B cell (primary cell): ENCODE measurements at regions of chr14 and their contacts with region 1.

Region 1: GRCh38 chr14:74905375-74906142 is 17.5 kb downstream of the RPS6KL1 start:
- DNase-seq: peak; percentile 79
- ATAC-seq: peak; percentile 72
- H3K4me3 ChIP-seq: no peak overlapping the region
- H3K4me3 Mint-ChIP-seq: no peak overlapping the region
- H3K27ac ChIP-seq: peak overlapping the region in 1 of 2 donors; percentile 33
- H3K27ac Mint-ChIP-seq: peak overlapping the region; percentile 73
- H3K4me1 ChIP-seq: peaks cover 17 to 52% of the 10 kb centered on the region in 2 donors
- H3K4me1 Mint-ChIP-seq: peaks cover 41% of the 10 kb centered on the region
- H3K27me3 ChIP-seq: no peaks in the 10 kb centered on the region
- H3K27me3 Mint-ChIP-seq: no peaks in the 10 kb centered on the region
- CTCF ChIP-seq: peak; percentile 93

Region 2: GRCh38 chr14:74860906-74861733 is 44.4 kb before region 1 on chr14:
- CTCF ChIA-PET with region 1: interaction called, 926 read pairs
- POLR2A ChIA-PET with region 1: interaction called, 7 read pairs
- intact Hi-C with region 1: loop called (anchors 1 kb)
- DNase-seq: peak; percentile 88
- ATAC-seq: peak; percentile 81
- H3K4me3 ChIP-seq: no peak overlapping the region
- H3K4me3 Mint-ChIP-seq: no peak overlapping the region
- H3K27ac ChIP-seq: no peak overlapping the region
- H3K27ac Mint-ChIP-seq: no peak overlapping the region
- H3K4me1 ChIP-seq: peaks cover 0 to 19% of the 10 kb centered on the region in 2 donors
- H3K4me1 Mint-ChIP-seq: peaks cover 9% of the 10 kb centered on the region
- H3K27me3 ChIP-seq: no peaks in the 10 kb centered on the region
- H3K27me3 Mint-ChIP-seq: no peaks in the 10 kb centered on the region
- CTCF ChIP-seq: peak; percentile 87

Region 3: DNA sequence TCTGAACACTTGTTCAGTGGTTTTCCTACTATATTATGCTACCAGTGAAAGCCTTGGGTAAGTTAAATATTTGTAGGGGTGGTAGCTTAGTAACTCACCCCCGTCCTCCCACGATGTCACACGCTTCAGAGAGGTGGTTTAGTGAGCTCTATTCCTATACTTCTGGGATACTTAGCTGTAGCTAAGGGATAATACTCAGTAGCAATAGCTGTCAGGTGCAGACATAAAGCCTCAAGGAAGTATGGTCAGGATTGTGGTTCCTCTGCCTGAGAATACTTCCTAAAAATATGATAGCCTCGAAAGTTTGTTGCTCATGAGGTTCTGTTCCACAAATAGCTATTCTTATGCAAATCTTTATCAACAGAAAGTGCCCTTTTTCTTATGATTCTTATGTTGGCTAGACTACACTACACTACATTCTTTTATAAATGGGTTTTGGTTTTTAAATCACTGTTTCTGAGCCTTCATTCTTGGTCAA is 11.9 kb before region 1 on chr14:
- CTCF ChIA-PET with region 1: interaction called, 59 read pairs
- POLR2A ChIA-PET with region 1: no interaction called
- intact Hi-C with region 1: no loop called
- DNase-seq: peak; percentile 64
- ATAC-seq: peak; percentile 53
- H3K4me3 ChIP-seq: no peak overlapping the region
- H3K4me3 Mint-ChIP-seq: peak overlapping the region; percentile 54
- H3K27ac ChIP-seq: peak overlapping the region; percentile 62 to 76
- H3K27ac Mint-ChIP-seq: peak overlapping the region; percentile 92
- H3K4me1 ChIP-seq: peaks cover 23 to 32% of the 10 kb centered on the region in 2 donors
- H3K4me1 Mint-ChIP-seq: peaks cover 32% of the 10 kb centered on the region
- H3K27me3 ChIP-seq: no peaks in the 10 kb centered on the region
- H3K27me3 Mint-ChIP-seq: no peaks in the 10 kb centered on the region
- CTCF ChIP-seq: no peak

Region 4: DNA sequence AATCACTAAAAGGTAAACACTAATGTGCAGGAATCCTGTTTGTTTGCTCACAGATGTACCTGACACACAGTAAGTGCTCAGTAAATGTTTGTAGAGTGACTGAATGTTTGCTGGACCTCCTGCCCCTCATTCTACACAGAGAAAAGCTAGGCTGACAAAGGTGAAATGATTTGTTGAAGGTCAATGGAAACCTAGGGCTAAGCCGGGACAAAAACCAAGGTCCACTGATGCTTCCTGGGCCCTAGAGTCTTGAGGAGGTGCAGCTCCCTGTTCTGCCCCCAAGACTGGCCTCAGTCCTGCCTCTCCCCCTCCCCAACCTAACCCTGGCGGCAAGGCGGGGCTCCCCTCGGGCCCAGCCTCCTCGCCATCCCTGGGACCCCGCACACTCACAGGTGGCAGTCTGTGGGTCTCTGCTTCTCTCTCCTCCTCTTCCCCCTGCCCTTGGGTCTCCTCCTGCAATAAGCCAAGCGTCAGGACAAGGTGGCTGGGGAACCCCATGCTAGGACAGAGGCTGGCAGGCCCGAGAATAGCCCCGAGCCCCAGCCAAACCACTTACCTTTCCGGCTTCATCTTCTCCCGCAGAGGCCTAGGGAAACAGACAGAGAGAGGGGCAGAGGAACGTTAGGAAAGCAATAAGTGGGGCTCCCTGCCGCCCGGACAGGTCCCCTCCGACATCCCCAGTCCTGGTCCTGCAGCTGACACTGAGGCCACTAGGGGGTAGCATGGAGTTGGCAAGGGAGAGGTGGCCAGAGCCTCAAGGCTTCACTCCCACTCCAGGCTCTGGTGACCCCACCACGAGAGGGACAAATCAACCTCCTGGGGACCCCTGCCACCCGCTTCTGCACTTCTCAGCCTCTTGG is 40.5 kb after region 1 on chr14:
- CTCF ChIA-PET with region 1: interaction called, 14 read pairs
- POLR2A ChIA-PET with region 1: no interaction called
- intact Hi-C with region 1: no loop called
- DNase-seq: peak; percentile 80
- ATAC-seq: peak; percentile 71
- H3K4me3 ChIP-seq: no peak overlapping the region
- H3K4me3 Mint-ChIP-seq: peak overlapping the region; percentile 32
- H3K27ac ChIP-seq: no peak overlapping the region
- H3K27ac Mint-ChIP-seq: peak overlapping the region; percentile 72
- H3K4me1 ChIP-seq: peaks cover 31 to 35% of the 10 kb centered on the region in 2 donors
- H3K4me1 Mint-ChIP-seq: peaks cover 34% of the 10 kb centered on the region
- H3K27me3 ChIP-seq: no peaks in the 10 kb centered on the region
- H3K27me3 Mint-ChIP-seq: no peaks in the 10 kb centered on the region
- CTCF ChIP-seq: peak; percentile 97